Motor neuron (in vitro differentiated cells): ENCODE measurements at regions of chr3 and their contacts with region 1.

Region 1: GRCh38 chr3:64533617-64534317 is 154.0 kb downstream of the ADAMTS9 start:
- ATAC-seq: peak; percentile 92 to 99 (median 98)
- H3K4me3 ChIP-seq: no peak overlapping the region
- H3K27ac ChIP-seq: no peak overlapping the region
- H3K4me1 ChIP-seq: peaks cover 0 to 11% of the 10 kb centered on the region in 2 donors

Region 2: DNA sequence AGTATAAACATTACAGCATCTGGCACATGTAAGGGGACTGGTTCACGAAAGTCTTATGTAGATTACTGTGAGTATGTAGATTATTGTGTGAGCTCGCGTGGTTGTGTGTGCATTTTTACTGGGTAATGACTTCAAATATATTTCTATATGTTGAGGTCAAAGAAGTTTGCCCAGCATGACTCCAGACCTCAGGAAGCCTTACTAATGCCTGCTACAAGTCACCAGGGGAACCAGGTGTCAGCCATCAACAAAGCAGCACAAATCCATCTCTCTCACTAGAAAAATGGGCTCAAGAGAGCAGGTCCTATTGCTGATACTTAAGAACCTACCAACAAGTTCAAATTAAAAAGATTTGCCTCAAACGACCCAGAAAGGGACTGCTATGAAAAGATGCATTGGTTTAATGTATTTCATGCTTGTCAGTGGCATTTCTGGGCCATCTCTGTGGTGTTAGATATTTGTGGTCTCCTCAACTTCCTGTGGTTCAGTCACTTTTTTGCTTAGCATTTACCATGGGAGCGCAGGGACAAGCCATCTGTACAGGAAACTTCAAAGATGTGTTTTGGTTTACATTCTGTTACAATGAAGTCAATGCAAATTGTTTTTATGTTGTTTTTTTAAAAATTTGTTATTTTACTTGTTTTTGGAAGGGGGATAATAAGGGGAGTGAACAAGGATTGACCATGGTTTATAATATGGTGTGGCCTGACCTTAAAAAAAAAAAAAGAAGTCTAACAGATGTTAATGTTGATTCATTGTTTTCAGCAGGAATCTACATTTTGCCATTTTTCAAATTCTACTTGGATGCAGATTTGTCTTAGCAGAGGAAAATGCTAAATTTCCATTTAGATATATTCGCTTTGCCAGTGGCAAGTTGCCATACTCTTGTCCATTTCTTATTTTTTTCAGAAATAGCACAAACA is 326.1 kb after region 1 on chr3:
- in situ Hi-C with region 1: no loop called
- ATAC-seq: peak in 3 of 8 experiments; percentile 65 to 88 (median 88)
- H3K4me3 ChIP-seq: no peak overlapping the region
- H3K27ac ChIP-seq: no peak overlapping the region
- H3K4me1 ChIP-seq: peaks cover 0 to 31% of the 10 kb centered on the region in 2 donors

Region 3: DNA sequence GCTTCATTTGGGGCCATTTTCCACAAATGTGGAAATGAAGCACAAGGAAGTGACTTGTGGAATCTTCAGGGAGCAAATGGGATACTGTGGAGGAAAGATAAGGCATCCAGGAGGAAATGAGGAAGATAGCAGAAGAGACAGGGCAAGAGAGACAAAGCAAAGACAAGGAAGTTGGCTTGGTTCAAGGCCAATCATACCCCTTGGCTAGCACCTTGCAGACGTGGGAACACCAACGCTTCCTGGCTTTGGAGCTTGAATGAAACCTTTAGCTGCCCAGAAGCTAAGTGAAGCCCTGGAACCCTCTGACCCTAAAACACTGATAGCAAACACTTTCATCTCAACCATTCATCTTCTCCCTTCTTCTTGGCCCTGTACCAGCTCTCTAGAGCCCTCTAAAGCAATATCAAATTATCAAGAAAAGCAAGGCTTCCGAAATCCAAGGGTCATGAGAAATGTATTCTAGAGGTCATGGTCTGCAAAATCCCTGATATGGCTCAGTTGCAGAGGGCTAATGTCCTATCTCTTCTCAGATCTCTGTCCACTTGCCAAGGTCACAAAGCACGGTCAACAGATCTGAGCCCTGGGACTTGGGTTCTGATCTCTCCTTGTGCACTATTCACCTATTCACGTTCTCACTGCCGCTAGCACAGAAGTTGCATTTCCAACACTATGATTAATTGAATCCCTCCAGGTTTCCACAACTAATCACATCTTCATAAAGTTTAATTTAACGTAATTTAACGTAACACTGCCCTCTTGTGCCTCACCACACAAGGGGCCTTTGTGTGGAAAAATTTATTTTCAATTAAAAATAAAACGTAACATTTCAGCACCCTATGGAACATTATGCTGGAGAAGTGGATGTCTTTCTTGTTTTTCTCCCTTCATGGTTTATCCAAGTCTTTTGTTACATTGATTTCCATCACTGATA is 711.6 kb after region 1 on chr3:
- in situ Hi-C with region 1: loop called in 2 of 9 experiments (anchors 25 kb)
- ATAC-seq: peak in 3 of 8 experiments; percentile 41 to 65 (median 48)
- H3K4me3 ChIP-seq: no peak overlapping the region
- H3K27ac ChIP-seq: no peak overlapping the region
- H3K4me1 ChIP-seq: peaks cover 5 to 15% of the 10 kb centered on the region in 2 donors

Region 4: GRCh38 chr3:65412588-65412987 is 878.8 kb after region 1 on chr3:
- in situ Hi-C with region 1: loop called in 2 of 9 experiments (anchors 25 kb)
- ATAC-seq: peak in 5 of 8 experiments; percentile 84 to 99 (median 96)
- H3K4me3 ChIP-seq: no peak overlapping the region
- H3K27ac ChIP-seq: no peak overlapping the region
- H3K4me1 ChIP-seq: peaks cover 8 to 40% of the 10 kb centered on the region in 2 donors

Region 5: DNA sequence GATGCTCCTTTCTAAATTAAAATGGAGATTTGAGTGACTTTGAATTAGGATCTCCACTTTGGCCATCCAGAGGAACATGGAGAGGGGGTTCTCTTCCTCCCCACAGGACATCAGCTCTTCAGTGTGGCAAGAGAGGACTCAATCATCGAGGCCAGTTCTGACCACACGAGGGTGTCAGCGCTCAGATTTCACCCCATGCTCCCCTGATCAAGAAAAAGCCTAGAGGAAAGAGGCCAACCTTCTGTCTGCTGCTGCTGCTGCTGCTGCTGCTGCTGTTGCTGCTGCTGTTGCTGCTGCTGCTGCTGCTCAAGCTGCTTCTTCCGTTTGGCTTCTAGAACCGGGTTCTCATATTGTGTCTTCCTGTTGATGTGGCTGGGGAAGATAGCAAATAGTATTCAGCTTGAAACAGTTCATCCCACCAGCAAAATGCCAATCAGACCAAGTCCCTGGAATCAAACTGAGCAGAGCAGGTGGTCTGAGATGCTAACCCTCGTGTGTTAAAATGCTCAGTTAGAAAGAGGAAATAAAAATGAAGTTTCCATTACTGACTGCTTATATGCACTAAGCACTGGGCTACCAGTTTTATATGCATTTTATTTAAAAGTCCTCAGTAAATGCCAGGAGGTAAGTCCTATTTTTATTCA is 906.0 kb after region 1 on chr3:
- in situ Hi-C with region 1: loop called in 2 of 9 experiments (anchors 25 kb)
- ATAC-seq: peak; percentile 89 to 99 (median 98)
- H3K4me3 ChIP-seq: no peak overlapping the region
- H3K27ac ChIP-seq: no peak overlapping the region
- H3K4me1 ChIP-seq: peaks cover 0 to 11% of the 10 kb centered on the region in 2 donors

Region 6: GRCh38 chr3:65751123-65751700 is 1217.4 kb after region 1 on chr3:
- in situ Hi-C with region 1: loop called in 1 of 9 experiments (anchors 25 kb)
- ATAC-seq: peak; percentile 28 to 83 (median 72)
- H3K4me3 ChIP-seq: no peak overlapping the region
- H3K27ac ChIP-seq: no peak overlapping the region
- H3K4me1 ChIP-seq: peaks cover 2 to 6% of the 10 kb centered on the region in 2 donors

Region 7: DNA sequence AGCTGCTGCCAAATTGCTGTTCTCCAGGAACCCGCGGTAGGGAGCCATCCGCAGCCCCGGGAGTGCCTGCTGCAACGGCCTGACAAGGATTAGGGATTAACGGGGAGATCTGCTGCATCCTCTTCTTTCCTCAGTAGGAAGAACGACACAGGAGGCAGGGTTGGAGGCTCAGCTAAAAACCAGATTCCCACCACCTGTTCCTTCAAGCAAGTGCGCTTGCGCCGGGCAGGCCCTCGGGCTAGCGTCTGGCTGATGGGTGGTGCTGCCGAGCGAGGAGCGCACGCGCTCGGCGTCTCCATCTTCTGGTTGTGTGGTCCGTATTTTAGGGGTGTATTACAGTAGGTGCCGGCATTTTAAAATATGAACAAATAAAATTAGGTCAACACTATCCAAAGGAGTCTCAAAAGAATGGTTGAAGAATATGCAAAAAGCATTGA is 1661.6 kb after region 1 on chr3:
- in situ Hi-C with region 1: loop called in 1 of 9 experiments (anchors 25 kb)
- ATAC-seq: peak in 7 of 8 experiments; percentile 48 to 96 (median 78)
- H3K4me3 ChIP-seq: peak overlapping the region in 3 of 5 donors; percentile 15 to 23 (median 16)
- H3K27ac ChIP-seq: no peak overlapping the region
- H3K4me1 ChIP-seq: peaks cover 0 to 3% of the 10 kb centered on the region in 2 donors